ENCODE measurements at regions of chr10 and their contacts with region 1.

Region 1: GRCh38 chr10:79475119-79475653 is 29.8 kb upstream of the ZCCHC24 start:
- DNase-seq: no peak
- ATAC-seq: no peak
- H3K4me3 ChIP-seq: no peak overlapping the region
- H3K27ac ChIP-seq: no peak overlapping the region
- H3K4me1 ChIP-seq: no peaks in the 10 kb centered on the region
- H3K27me3 ChIP-seq: peaks cover 1% of the 10 kb centered on the region; the same call in 1 of the 2 replicates
- CTCF ChIP-seq: no peak
- POLR2A ChIP-seq: no peak
- RAD21 ChIP-seq: no peak

Region 2: DNA sequence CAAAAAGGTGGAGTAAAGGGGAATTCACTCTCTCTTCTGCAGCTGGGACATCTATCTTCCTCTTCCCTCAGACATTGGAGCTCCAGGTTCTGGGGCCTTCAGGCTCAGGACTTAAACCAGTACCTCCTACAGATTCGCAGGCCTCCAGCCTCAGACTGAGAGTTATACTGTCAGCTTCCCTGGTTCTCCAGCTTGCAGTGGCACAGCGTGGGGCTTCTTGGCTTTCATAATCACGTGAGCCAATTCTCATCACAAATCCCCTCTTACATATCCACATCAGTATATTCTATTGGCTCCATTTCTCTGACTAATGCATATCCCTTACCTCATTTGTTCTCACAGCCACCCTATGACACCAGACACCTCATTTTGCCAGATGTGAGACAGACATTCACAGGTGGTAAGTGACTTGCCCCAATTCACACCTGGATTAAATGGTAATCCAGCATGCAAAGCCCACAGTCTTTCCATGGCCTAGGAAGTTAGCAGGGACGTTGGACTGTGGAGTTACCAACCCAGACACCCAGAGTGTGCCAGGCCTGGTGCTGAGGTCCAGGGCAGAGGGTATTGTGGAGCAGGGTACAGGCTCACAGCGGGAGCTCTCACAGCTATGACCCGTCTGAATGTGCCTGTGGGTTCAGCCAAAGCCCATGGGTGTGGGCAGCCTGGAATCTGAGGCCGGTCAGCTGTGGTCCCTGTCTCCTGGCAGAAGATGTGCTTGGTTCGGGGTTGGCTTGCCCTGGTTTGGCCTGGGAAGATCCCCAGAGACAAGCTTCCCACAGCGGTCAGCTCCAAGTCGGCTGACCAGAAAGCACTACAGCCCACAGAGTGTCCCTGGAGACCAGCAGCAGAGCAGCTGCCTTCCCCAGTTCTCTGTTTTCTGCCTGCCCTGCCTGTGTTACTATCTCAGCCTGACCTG is 11.3 kb before region 1 on chr10:
- CTCF ChIA-PET with region 1: interaction called, 11 read pairs
- POLR2A ChIA-PET with region 1: no interaction called
- dilution Hi-C with region 1: no loop called
- in situ Hi-C with region 1: no loop called
- intact Hi-C with region 1: no loop called
- DNase-seq: no peak
- ATAC-seq: no peak
- H3K4me3 ChIP-seq: no peak overlapping the region
- H3K27ac ChIP-seq: no peak overlapping the region
- H3K4me1 ChIP-seq: peaks cover 11% of the 10 kb centered on the region
- H3K27me3 ChIP-seq: no peaks in the 10 kb centered on the region
- CTCF ChIP-seq: no peak
- POLR2A ChIP-seq: no peak
- RAD21 ChIP-seq: no peak

Measured in IMR-90 (cell line).